ENCODE measurements at regions of chr9 and their contacts with region 1.

Region 1: GRCh38 chr9:31683116-31683515 is 701.3 kb upstream of the ACO1 start:
- DNase-seq: no peak
- H3K4me3 ChIP-seq: no peak overlapping the region
- H3K27ac ChIP-seq: no peak overlapping the region
- H3K4me1 ChIP-seq: no peaks in the 10 kb centered on the region
- H3K27me3 ChIP-seq: no peaks in the 10 kb centered on the region
- CTCF ChIP-seq: no peak
- POLR2A ChIP-seq: no peak

Region 2: GRCh38 chr9:31272456-31273295 is 410.4 kb before region 1 on chr9:
- intact Hi-C with region 1: loop called (anchors 10 kb)
- DNase-seq: no peak
- H3K4me3 ChIP-seq: no peak overlapping the region
- H3K27ac ChIP-seq: no peak overlapping the region
- H3K4me1 ChIP-seq: no peaks in the 10 kb centered on the region
- H3K27me3 ChIP-seq: no peaks in the 10 kb centered on the region
- CTCF ChIP-seq: no peak
- POLR2A ChIP-seq: no peak

Region 3: DNA sequence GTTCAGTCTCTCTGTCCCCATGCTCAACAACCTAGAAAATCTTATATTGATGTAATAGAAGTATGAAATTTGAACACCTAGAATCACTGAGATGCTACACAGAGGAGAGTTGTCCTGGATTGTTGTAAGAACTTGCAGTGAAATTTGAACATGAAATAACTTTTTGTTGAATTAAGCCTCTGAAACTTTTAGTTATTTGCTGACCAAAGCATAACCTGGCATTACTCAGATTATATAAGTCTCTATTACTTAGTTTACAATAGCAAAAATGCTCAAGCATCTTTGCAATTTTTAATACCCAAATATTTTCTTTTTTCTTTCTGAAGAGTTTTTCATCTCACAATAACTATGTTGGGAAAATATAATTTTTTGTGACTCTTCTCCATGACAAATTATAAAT is 70.6 kb after region 1 on chr9:
- intact Hi-C with region 1: no loop called
- DNase-seq: no peak
- H3K4me3 ChIP-seq: no peak overlapping the region
- H3K27ac ChIP-seq: no peak overlapping the region
- H3K4me1 ChIP-seq: no peaks in the 10 kb centered on the region
- H3K27me3 ChIP-seq: no peaks in the 10 kb centered on the region
- CTCF ChIP-seq: no peak
- POLR2A ChIP-seq: no peak

Measured in breast epithelium (tissue), 4 donors.